ENCODE measurements at regions of chr18 and their contacts with region 1.

Region 1: DNA sequence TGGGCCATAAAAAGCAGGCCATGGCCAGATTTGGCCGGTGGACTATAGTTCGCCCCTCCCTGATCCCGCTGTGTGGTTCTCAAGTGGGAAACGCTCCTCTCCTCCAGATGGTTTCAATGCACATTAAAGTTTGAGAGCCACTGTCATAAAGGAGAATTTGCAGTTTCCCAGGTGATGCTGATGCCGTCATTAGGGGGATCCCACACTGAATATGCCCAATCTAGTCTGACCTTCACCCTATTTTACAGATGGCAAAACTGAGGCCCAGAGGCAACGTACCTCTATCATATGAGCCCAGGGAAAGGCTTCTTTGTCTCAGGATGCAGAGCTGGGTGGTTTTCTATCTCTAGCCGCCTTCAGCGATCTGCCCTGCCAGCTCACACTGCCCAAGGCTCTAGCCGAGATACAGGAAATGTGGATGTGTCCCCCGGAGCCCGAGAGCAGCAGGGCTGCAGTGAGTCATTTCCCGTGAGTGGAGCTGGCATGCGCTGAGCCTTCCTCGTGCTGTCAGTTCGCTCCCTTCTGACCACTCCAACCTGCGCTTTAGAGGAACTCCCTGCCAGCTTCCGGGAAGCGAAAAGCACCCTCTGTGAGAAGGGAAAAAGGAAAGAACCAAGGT is 116.2 kb downstream of the SMAD7 start:
- DNase-seq: peak; percentile 81
- ATAC-seq: peak; percentile 84
- H3K4me3 ChIP-seq: peak overlapping the region; percentile 70
- H3K27ac ChIP-seq: peak overlapping the region; percentile 93
- H3K4me1 ChIP-seq: peaks cover 41% of the 10 kb centered on the region
- H3K27me3 ChIP-seq: no peaks in the 10 kb centered on the region
- CTCF ChIP-seq: no peak
- EP300 ChIP-seq: no peak
- POLR2A ChIP-seq: peak; percentile 38
- RAD21 ChIP-seq: no peak

Region 2: GRCh38 chr18:47545613-47546012 is 1288.9 kb before region 1 on chr18:
- CTCF ChIA-PET with region 1: no interaction called
- POLR2A ChIA-PET with region 1: no interaction called
- RAD21 ChIA-PET with region 1: no interaction called
- SMC1A ChIA-PET with region 1: no interaction called
- in situ Hi-C with region 1: no loop called
- intact Hi-C with region 1: no loop called
- DNase-seq: no peak
- ATAC-seq: no peak
- H3K4me3 ChIP-seq: no peak overlapping the region
- H3K27ac ChIP-seq: no peak overlapping the region
- H3K4me1 ChIP-seq: no peaks in the 10 kb centered on the region
- H3K27me3 ChIP-seq: peaks cover 0 to 4% of the 10 kb centered on the region in 2 experiments; a peak in 1 of 4 replicates
- CTCF ChIP-seq: 0 out of 6 replicates have a peak, but pooled peaks of 1 of the 3 experiments have one; percentile 5
- EP300 ChIP-seq: no peak
- POLR2A ChIP-seq: no peak
- RAD21 ChIP-seq: no peak

Region 3: DNA sequence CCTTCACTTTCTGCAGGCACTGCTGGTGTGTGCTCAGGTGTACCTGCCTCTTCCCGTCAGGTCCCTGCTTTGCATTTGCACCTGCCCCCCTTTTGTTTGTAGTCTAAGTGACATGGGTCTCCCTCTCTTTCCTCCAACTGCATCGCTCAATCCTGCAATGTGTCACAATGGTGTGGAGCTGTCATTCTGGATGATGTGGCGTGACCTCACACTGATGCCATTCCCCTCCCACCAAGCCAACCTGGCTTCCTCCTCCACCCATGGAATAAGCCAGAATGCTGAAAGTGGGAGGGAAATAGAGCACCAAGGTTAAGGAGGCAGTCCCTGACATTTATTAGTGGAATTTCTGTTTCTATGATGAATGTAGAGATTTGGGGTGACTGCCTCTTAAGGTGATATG is 582.0 kb before region 1 on chr18:
- CTCF ChIA-PET with region 1: no interaction called
- POLR2A ChIA-PET with region 1: no interaction called
- RAD21 ChIA-PET with region 1: no interaction called
- SMC1A ChIA-PET with region 1: no interaction called
- in situ Hi-C with region 1: no loop called
- intact Hi-C with region 1: no loop called
- DNase-seq: no peak
- ATAC-seq: no peak
- H3K4me3 ChIP-seq: no peak overlapping the region
- H3K27ac ChIP-seq: no peak overlapping the region
- H3K4me1 ChIP-seq: no peaks in the 10 kb centered on the region
- H3K27me3 ChIP-seq: no peaks in the 10 kb centered on the region
- CTCF ChIP-seq: no peak
- EP300 ChIP-seq: no peak
- POLR2A ChIP-seq: no peak
- RAD21 ChIP-seq: no peak

Region 4: DNA sequence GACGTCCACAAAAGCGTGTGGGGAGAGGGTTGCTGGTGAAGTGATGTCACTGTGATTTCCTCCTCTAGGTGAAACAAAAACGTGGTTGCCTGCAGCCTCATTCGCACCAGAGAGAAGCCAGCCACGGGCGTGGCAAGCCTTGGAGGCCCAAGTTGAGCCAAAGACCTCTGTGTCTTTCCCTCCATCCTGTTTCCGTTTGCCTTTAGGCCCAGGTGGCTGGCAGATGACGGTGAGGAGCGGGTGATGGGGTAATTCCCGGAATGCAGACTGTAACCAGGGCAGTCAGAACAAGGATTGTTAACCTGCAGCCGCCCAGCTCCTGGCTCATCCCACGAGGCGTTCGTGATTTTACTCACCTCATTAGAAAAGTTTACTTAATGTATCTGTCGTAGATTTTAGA is 281.3 kb before region 1 on chr18:
- CTCF ChIA-PET with region 1: no interaction called
- POLR2A ChIA-PET with region 1: no interaction called
- RAD21 ChIA-PET with region 1: no interaction called
- SMC1A ChIA-PET with region 1: no interaction called
- in situ Hi-C with region 1: no loop called
- intact Hi-C with region 1: no loop called
- DNase-seq: no peak
- ATAC-seq: no peak
- H3K4me3 ChIP-seq: no peak overlapping the region
- H3K27ac ChIP-seq: no peak overlapping the region
- H3K4me1 ChIP-seq: no peaks in the 10 kb centered on the region
- H3K27me3 ChIP-seq: no peaks in the 10 kb centered on the region
- CTCF ChIP-seq: no peak
- EP300 ChIP-seq: no peak
- POLR2A ChIP-seq: no peak
- RAD21 ChIP-seq: no peak

Region 5: DNA sequence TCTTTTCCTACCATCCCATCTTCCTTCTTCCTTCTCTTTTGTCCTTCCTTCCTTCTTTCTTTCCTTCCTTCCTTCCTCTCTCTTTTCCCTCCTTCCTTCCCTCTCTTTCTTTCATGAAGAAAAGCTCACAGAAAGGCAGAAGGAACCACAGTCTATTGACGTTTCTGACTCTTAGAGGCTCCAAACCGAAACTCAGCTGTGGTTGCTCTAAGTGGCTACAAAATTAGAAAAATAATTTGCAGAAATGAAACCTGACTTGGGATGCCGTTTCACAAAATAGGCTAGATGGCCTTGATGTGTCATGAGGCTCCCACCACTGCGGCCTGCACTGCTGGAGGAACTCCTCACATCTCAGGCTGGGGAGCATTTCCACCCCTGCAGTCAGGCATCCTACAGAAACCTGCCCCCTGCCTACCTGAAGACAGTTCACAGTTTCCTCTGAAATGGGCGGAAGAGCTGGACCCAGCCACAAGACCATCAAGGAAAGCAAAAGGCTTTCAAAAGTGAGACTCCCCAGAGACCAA is 49.4 kb before region 1 on chr18:
- CTCF ChIA-PET with region 1: interaction called, 13 read pairs
- POLR2A ChIA-PET with region 1: interaction called, 20 read pairs
- RAD21 ChIA-PET with region 1: interaction called, 72 read pairs
- SMC1A ChIA-PET with region 1: interaction called, 76 read pairs
- in situ Hi-C with region 1: no loop called
- intact Hi-C with region 1: loop called (anchors 2 kb)
- DNase-seq: peak; percentile 94
- ATAC-seq: peak; percentile 94
- H3K4me3 ChIP-seq: peak overlapping the region; percentile 54; the same call in 1 of the 2 replicates
- H3K27ac ChIP-seq: peak overlapping the region; percentile 91
- H3K4me1 ChIP-seq: peaks cover 47% of the 10 kb centered on the region
- H3K27me3 ChIP-seq: no peaks in the 10 kb centered on the region
- CTCF ChIP-seq: no peak
- EP300 ChIP-seq: peak; percentile 85 to 87; a peak in 2 of 4 replicates
- POLR2A ChIP-seq: 0 out of 2 replicates have a peak, but pooled peaks have one; percentile 27
- RAD21 ChIP-seq: peak; percentile 23; the same call in 1 of the 2 replicates

Region 6: DNA sequence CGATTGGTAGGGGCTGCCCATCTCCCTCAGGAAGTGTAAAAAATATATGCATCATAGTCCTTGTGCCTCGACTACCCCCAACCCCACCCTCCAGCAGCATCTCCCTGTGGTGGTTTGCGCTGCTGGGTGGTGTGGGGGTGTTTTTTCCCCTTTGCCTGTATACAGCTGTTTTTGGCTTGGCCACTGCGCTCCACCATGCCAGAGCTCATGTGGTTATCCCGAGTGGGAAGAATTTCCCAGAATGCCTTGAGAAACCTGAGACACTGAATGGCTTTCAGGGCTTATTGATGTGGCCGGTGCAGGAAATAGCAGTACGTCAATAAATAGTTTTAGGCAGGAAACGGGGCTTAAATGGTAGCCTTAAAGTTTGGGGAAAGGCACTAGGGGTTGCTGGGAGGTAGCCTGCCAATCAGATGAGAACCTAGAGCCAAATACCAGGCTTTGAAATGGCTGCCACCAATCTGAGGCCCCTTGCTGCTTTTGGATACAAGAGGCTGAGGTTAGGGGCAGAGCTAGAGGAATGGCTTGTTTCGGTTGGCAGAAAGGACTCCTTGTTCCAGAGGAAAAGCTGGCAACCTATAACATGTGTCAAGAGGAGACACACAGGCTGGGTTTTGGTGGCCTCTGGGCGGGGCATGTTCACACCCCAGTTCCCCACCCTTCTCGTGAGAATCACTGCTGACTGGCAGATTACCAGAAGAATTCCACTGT is 27.8 kb before region 1 on chr18:
- CTCF ChIA-PET with region 1: interaction called, 5 read pairs
- POLR2A ChIA-PET with region 1: interaction called, 17 read pairs
- RAD21 ChIA-PET with region 1: interaction called, 50 read pairs
- SMC1A ChIA-PET with region 1: interaction called, 129 read pairs
- in situ Hi-C with region 1: no loop called
- intact Hi-C with region 1: loop called (anchors 2 kb)
- DNase-seq: no peak
- ATAC-seq: peak; percentile 55
- H3K4me3 ChIP-seq: no peak overlapping the region
- H3K27ac ChIP-seq: peak overlapping the region; percentile 53
- H3K4me1 ChIP-seq: peaks cover 34% of the 10 kb centered on the region
- H3K27me3 ChIP-seq: no peaks in the 10 kb centered on the region
- CTCF ChIP-seq: no peak
- EP300 ChIP-seq: no peak
- POLR2A ChIP-seq: no peak
- RAD21 ChIP-seq: no peak

Region 7: GRCh38 chr18:48820483-48821250 is 13.9 kb before region 1 on chr18:
- CTCF ChIA-PET with region 1: interaction called, 36 read pairs
- POLR2A ChIA-PET with region 1: interaction called, 63 read pairs
- RAD21 ChIA-PET with region 1: interaction called, 68 read pairs
- SMC1A ChIA-PET with region 1: interaction called, 129 read pairs
- in situ Hi-C with region 1: no loop called
- intact Hi-C with region 1: loop called (anchors 1 kb)
- DNase-seq: peak; percentile 93
- ATAC-seq: peak; percentile 95
- H3K4me3 ChIP-seq: no peak overlapping the region
- H3K27ac ChIP-seq: peak overlapping the region; percentile 60
- H3K4me1 ChIP-seq: peaks cover 20% of the 10 kb centered on the region
- H3K27me3 ChIP-seq: no peaks in the 10 kb centered on the region
- CTCF ChIP-seq: no peak
- EP300 ChIP-seq: peak; percentile 51 to 83
- POLR2A ChIP-seq: no peak
- RAD21 ChIP-seq: peak; percentile 9; the same call in 1 of the 2 replicates

Region 8: GRCh38 chr18:48913201-48913600 is 78.7 kb after region 1 on chr18:
- CTCF ChIA-PET with region 1: no interaction called
- POLR2A ChIA-PET with region 1: no interaction called
- RAD21 ChIA-PET with region 1: no interaction called
- SMC1A ChIA-PET with region 1: interaction called, 5 read pairs
- in situ Hi-C with region 1: no loop called
- intact Hi-C with region 1: loop called (anchors 5 kb)
- DNase-seq: no peak
- ATAC-seq: peak; percentile 79
- H3K4me3 ChIP-seq: no peak overlapping the region
- H3K27ac ChIP-seq: no peak overlapping the region
- H3K4me1 ChIP-seq: peaks cover 10% of the 10 kb centered on the region
- H3K27me3 ChIP-seq: no peaks in the 10 kb centered on the region
- CTCF ChIP-seq: peak; percentile 38 to 51 (median 43); a peak in 5 of 6 replicates
- EP300 ChIP-seq: no peak
- POLR2A ChIP-seq: no peak
- RAD21 ChIP-seq: peak; percentile 34; the same call in 1 of the 2 replicates

Measured in GM12878 (cell line).